AG04450 (cell line): ENCODE measurements at regions of chr15 and their contacts with region 1.

Region 1: DNA sequence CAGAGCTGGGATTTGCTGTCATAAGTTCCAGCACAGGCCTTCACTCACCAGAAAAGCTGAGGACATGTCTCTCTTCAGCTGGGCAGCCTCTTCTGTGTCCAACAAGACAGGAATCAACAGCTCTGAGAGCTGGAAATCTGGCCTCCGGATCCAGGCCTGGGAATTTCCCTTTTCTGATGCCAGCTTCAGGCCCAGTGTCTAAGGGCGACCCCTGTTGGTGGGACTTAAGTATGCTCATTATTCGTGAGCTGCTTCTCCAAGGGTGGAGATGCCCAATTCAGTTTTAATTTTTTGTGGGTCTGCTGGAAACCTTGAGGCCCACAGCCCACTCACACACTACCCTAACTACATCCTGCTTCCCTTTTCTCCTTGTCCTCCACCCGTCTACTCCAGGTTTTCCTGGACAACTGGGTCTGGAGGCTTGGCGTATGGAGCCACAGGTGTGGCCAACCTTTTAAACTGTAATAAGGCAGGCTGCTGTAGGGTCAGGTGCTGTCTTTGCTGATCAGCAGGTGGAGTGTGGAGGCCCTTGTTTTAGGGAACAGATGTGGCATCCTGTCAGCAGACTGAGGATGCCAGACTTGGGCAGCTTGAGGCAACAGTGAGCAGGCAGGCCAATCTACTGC is 2.6 kb upstream of the CEMIP start:
- DNase-seq: peak; percentile 48
- H3K4me3 ChIP-seq: no peak overlapping the region
- H3K27ac ChIP-seq: peak overlapping the region; percentile 52
- H3K27me3 ChIP-seq: no peaks in the 10 kb centered on the region
- CTCF ChIP-seq: peak; percentile 75

Region 2: GRCh38 chr15:80455668-80456442 is 320.7 kb before region 1 on chr15:
- CTCF ChIA-PET with region 1: interaction called, 89 read pairs
- POLR2A ChIA-PET with region 1: interaction called, 24 read pairs
- DNase-seq: peak; percentile 93
- H3K4me3 ChIP-seq: peak overlapping the region; percentile 17; the same call in 1 of the 2 replicates
- H3K27ac ChIP-seq: peak overlapping the region; percentile 87
- H3K27me3 ChIP-seq: no peaks in the 10 kb centered on the region
- CTCF ChIP-seq: peak; percentile 97

Region 3: DNA sequence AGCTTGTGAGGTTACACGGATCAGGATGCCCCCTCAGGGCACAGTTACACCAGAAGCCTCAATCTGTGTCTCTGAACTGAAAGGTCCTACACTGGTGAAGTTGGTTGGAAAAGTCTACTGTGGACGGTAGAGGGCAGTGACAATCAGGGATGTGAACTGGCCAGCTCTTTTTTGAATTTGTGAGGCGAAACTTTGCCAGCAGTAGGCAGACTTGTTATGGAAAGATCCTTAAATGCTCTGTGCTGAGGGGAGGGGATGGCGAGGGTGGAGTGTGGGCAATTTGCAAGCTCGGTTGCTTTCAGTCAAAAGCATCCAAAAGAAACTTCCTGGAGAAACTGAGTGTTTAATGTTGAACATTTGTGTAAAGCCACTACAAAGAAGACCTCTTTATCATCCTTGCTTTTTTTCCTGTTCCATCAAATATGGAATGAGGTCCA is 208.8 kb before region 1 on chr15:
- CTCF ChIA-PET with region 1: interaction called, 169 read pairs
- POLR2A ChIA-PET with region 1: interaction called, 12 read pairs
- DNase-seq: peak; percentile 73
- H3K4me3 ChIP-seq: no peak overlapping the region
- H3K27ac ChIP-seq: no peak overlapping the region
- H3K27me3 ChIP-seq: no peaks in the 10 kb centered on the region
- CTCF ChIP-seq: peak; percentile 95

Region 4: GRCh38 chr15:80619680-80620079 is 156.9 kb before region 1 on chr15:
- CTCF ChIA-PET with region 1: interaction called, 27 read pairs
- POLR2A ChIA-PET with region 1: interaction called, 4 read pairs
- DNase-seq: no peak
- H3K4me3 ChIP-seq: no peak overlapping the region
- H3K27ac ChIP-seq: no peak overlapping the region
- H3K27me3 ChIP-seq: no peaks in the 10 kb centered on the region
- CTCF ChIP-seq: peak; percentile 44

Region 5: DNA sequence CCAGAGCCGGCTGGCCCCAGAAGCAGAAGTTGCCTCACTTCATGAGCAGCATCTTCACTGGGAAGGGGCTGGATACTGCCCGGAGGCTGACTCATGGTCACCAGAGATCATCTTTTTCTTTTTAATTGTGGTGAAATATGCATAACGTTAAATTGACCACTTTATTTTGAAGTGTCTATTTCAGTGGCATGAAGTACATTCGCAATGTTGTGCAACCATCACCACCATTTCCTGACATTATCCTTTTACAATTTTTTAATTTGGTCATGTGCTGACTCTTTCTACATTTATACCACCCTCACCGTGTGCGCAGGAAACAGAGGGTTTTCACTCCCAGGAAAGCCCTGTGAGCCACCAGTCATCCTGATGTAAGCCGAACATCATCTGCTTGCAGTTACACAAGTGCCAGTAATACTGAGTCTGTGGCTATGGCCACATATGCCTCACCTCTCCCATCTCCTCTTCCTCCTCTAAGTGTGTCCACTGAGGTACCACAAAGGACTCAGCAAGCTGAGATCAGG is 133.0 kb before region 1 on chr15:
- CTCF ChIA-PET with region 1: no interaction called
- POLR2A ChIA-PET with region 1: no interaction called
- DNase-seq: no peak
- H3K4me3 ChIP-seq: no peak overlapping the region
- H3K27ac ChIP-seq: no peak overlapping the region
- H3K27me3 ChIP-seq: no peaks in the 10 kb centered on the region
- CTCF ChIP-seq: no peak

Region 6: DNA sequence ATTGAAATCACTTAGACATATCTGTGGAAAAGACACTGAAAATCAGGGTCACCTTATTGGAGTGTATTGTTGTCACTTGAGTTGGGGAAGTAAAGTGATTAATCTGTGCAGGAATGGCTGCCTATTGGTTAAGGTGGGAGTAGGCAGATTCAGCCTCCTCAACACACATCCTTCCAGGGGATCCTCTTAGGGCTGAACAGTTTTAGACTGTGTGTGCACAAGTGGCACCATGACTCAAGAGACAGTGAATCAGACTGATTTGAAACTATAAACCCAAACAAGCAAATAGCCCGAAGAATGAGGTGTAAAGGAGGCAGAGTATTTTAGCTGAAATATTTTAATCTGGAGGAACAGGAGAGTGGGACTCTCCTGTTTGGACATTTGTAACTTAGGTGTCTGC is 76.6 kb before region 1 on chr15:
- CTCF ChIA-PET with region 1: interaction called, 10 read pairs
- POLR2A ChIA-PET with region 1: interaction called, 7 read pairs
- DNase-seq: no peak
- H3K4me3 ChIP-seq: no peak overlapping the region
- H3K27ac ChIP-seq: no peak overlapping the region
- H3K27me3 ChIP-seq: no peaks in the 10 kb centered on the region
- CTCF ChIP-seq: no peak

Region 7: DNA sequence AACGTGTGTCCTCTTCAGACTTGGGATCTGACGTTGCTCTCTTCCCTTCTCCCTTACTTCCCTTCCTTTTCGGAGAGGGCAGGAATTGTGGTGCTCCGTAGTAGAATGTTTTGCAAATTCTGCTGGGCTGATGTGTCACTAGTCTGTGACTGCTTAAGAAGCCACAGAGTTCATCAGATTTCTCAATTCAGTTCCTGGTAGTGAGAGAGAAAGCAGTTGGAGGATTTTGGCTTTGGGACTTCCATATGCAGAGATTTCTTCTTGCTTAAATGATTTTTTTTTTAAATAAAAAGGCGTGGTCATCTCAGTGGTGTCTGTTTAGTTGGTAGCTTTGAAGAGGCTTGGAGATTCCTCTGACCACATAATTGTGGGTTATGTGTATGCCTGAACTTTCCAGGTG is 12.8 kb after region 1 on chr15:
- CTCF ChIA-PET with region 1: interaction called, 10 read pairs
- POLR2A ChIA-PET with region 1: interaction called, 12 read pairs
- DNase-seq: no peak
- H3K4me3 ChIP-seq: no peak overlapping the region
- H3K27ac ChIP-seq: peak overlapping the region; percentile 73
- H3K27me3 ChIP-seq: no peaks in the 10 kb centered on the region
- CTCF ChIP-seq: no peak

Region 8: GRCh38 chr15:82146990-82147461 is 1370.5 kb after region 1 on chr15:
- CTCF ChIA-PET with region 1: no interaction called
- POLR2A ChIA-PET with region 1: interaction called, 10 read pairs
- DNase-seq: no peak
- H3K4me3 ChIP-seq: no peak overlapping the region
- H3K27ac ChIP-seq: peak overlapping the region; percentile 55
- H3K27me3 ChIP-seq: no peaks in the 10 kb centered on the region
- CTCF ChIP-seq: no peak